ENCODE measurements at regions of chr9 and their contacts with region 1.

Region 1: DNA sequence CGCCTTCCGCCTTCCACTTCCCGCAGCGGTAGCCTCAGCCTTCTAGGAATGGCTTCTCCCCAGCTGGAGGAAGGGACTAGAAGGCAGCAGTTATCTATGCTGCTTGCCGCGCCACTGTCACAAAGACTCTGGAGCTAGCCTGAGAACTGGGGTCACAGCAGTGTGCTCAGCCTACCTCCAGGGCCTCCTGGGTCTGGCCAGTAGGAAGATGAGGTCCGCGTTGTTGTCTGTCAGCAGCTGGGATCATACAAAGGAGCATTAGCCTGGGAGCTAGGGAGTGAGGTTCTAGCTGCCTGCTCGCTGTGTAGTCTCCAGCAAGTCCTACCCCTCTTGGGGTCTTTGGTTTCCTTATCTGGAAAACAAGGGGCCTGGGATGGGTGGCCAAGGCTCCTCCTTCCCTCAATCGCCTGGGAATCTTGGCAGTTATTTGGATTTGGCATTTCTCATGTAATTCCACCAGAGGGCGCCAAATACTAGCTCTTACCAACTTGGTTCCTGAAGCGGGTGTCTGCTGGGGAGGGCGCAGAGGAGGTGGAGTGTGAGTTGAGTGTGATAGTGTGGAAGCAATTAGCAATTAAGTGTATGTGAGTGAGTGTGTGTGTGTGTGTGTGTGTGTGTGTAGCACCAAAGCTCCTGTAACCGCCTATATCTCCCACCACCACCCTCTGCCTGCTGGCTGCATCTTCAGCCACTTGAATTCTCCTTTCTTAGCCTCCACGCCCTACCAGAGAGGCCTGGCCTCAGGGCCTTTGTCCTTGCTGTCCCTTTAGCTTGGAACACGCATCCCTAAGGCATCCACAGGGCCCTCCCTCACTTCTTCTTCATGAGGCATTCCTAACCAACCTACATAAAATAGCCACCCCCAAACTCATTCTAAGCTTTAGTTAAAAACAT is 97.1 kb downstream of the ENTREP1 start:
- DNase-seq: no peak
- H3K4me3 ChIP-seq: no peak overlapping the region
- H3K27ac ChIP-seq: no peak overlapping the region
- H3K4me1 ChIP-seq: peaks cover 0 to 6% (median 0%) of the 10 kb centered on the region in 4 donors
- H3K27me3 ChIP-seq: no peaks in the 10 kb centered on the region
- CTCF ChIP-seq: peak; percentile 79 to 83 (median 81)
- EP300 ChIP-seq: no peak
- POLR2A ChIP-seq: no peak

Region 2: GRCh38 chr9:69549310-69550202 is 127.4 kb after region 1 on chr9:
- intact Hi-C with region 1: loop called (anchors 2 kb)
- DNase-seq: no peak
- H3K4me3 ChIP-seq: no peak overlapping the region
- H3K27ac ChIP-seq: no peak overlapping the region
- H3K4me1 ChIP-seq: peaks cover 0 to 7% (median 0%) of the 10 kb centered on the region in 4 donors
- H3K27me3 ChIP-seq: no peaks in the 10 kb centered on the region
- CTCF ChIP-seq: peak; percentile 86 to 88 (median 88)
- EP300 ChIP-seq: no peak
- POLR2A ChIP-seq: no peak

Region 3: DNA sequence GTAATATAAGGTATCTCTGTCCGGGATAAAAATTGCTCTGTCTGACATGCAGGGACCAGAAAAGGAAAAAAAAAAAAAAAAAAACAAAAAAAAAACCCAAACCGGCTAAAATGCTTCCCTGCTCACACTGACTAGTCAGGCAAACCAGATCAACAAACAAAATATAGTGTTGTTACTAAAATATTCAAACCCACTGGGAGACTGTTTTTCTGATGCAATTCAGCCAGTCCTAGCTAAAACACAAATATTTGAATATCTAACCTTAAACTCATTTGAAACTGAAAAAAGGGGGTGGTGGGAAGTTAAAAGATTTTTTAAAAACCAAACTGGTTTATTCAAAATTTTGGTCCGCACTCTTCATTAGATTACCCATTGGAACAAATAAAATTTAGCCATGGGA is 189.1 kb after region 1 on chr9:
- intact Hi-C with region 1: no loop called
- DNase-seq: no peak
- H3K4me3 ChIP-seq: no peak overlapping the region
- H3K27ac ChIP-seq: no peak overlapping the region
- H3K4me1 ChIP-seq: no peaks in the 10 kb centered on the region
- H3K27me3 ChIP-seq: no peaks in the 10 kb centered on the region
- CTCF ChIP-seq: no peak
- EP300 ChIP-seq: no peak
- POLR2A ChIP-seq: no peak

Region 4: DNA sequence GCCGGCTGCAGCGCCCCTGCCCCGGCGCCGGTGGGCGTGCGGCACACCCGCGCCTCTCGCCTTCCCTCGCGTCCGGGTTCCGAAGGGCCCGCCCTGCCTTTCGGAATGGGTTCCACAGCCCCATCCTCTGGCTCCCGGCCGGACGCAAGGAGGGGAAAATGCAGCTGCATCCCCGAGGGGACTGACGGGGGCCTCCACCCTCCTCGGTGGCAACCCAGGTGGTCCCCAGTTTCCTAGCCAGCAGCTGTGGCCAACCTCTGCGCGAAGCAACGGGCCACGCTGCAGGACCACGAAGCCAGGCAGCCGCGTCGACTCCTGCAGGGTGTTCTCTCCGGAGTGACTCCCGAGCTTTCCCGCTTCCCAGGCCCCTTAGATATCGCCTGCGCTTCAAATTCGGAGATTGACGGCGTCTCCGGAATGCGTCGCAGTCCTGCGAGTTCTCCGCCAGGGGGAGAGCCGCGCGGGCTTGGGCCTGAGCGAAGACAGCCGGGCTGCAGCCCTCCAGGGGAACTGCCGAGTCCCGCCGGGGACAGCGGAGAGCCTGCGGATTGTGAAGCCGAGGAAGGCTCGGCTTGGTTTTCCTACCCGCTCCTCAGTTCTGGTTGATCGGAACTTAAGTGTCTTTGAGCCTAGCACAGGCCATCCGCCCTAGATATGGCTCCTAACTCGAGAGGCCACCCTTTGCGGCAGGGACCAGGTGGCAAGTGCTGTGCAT is 250.6 kb after region 1 on chr9:
- intact Hi-C with region 1: loop called (anchors 10 kb)
- DNase-seq: no peak
- H3K4me3 ChIP-seq: peak overlapping the region; percentile 81 to 94 (median 87)
- H3K27ac ChIP-seq: peak overlapping the region; percentile 75 to 83 (median 82)
- H3K4me1 ChIP-seq: peaks cover 15 to 24% (median 23%) of the 10 kb centered on the region in 4 donors
- H3K27me3 ChIP-seq: peaks cover 0 to 3% (median 0%) of the 10 kb centered on the region in 4 donors
- CTCF ChIP-seq: peak; percentile 71 to 91 (median 88)
- EP300 ChIP-seq: no peak
- POLR2A ChIP-seq: no peak

Region 5: DNA sequence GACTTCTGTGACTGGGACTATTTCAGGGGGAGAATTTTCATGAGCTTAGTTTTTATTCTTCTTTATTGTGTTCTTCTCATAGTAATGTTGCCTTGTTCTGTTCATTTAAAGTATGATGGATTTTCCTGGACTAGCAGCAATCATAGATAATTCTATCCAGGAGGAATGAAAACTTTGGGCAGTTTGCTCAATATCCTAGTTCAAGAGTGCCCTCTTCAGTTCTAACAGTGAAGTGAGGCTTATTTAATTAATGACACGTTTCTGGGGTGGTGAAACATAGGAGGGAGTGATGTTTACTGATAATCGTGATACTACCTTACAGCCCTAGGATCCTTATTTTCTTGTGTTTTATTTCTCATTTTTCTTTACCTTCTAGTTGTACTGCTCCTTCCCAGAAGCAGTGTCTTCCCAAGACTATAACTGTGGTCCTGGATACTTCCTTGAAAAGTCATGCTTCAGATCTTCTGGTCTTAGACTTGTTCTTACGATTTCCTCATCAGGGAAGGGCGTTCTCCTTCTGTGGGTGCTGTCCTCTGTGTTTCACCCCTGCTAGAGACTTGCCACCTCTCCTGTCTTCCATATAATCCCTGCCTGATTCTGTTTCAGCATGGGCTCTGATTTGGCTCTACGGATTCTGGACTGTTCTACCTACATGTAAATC is 455.8 kb after region 1 on chr9:
- intact Hi-C with region 1: loop called (anchors 5 kb)
- DNase-seq: no peak
- H3K4me3 ChIP-seq: no peak overlapping the region
- H3K27ac ChIP-seq: no peak overlapping the region
- H3K4me1 ChIP-seq: no peaks in the 10 kb centered on the region
- H3K27me3 ChIP-seq: no peaks in the 10 kb centered on the region
- CTCF ChIP-seq: peak; percentile 44 to 60 (median 58)
- EP300 ChIP-seq: no peak
- POLR2A ChIP-seq: no peak

Measured in esophagus muscularis mucosa (tissue), 4 donors.